ENCODE measurements at regions of chr3 and their contacts with region 1.

Region 1: GRCh38 chr3:196502775-196503195 is 783 bp downstream of the RNF168 start:
- H3K4me3 ChIP-seq: peak overlapping the region; percentile 91
- H3K27ac ChIP-seq: peak overlapping the region; percentile 89
- H3K4me1 ChIP-seq: no peaks in the 10 kb centered on the region
- CTCF ChIP-seq: no peak

Region 2: DNA sequence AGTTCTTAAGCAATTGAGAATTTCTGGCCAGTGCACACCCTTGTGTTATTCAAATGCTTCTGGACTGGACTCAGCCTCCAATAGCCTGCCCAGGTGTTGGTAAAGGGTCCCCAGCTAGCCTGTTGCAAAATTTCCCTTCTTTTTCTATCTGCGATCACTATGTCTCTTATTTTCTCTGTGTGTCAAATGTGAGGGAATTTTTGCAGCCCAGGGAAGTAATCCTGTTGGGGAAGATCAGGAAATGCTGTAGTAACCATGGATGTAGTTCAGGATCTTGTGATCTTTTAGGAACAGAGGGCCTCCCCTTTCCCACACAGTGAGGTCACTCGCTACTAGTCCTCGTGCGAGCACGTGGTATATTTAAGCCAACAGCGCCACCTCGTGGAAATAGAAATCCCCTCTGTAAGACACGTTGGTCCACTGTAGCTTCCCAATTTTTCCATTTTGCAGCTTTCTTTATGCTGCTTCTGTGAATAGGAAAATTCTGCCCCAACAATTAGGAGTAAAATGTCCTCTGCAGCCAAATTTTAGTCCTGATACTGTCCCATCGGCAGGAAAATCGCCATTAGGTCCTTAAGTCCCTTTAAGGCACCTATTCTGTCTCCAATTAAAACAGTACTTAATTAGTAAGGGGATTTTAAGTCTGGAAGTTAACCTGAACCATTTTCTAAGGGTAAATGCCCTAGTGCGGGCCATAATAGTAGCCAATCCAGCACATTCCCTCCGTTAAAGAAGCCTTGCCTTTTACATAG is 16.4 kb after region 1 on chr3:
- CTCF ChIA-PET with region 1: interaction called, 5 read pairs
- POLR2A ChIA-PET with region 1: interaction called, 10 read pairs
- H3K4me3 ChIP-seq: no peak overlapping the region
- H3K27ac ChIP-seq: no peak overlapping the region
- H3K4me1 ChIP-seq: no peaks in the 10 kb centered on the region
- CTCF ChIP-seq: peak; percentile 59; the same call in 1 of the 2 replicates

Measured in HEK293 (cell line).